Activated naive CD8-positive, alpha-beta T cell treated with anti-CD3 and anti-CD28 coated beads, Interleukin-2, amount 10 ng/mL, durations not matched to agents 7 days and 5 days (primary cell): ENCODE measurements at regions of chr12 and their contacts with region 1.

Region 1: GRCh38 chr12:50111693-50112455 is at the start of gene COX14:
- DNase-seq: peak; percentile 99
- ATAC-seq: peak; percentile 89
- H3K4me3 Mint-ChIP-seq: peak within 1 kb of the TSS; percentile 100
- H3K27ac Mint-ChIP-seq: peak within 1 kb of the TSS; percentile 100
- H3K4me1 Mint-ChIP-seq: peaks cover 24% of the 10 kb centered on the region
- H3K27me3 Mint-ChIP-seq: no peaks in the 10 kb centered on the region
- total RNA-seq, gene COX14: 47.5 to 54.2 TPM

Region 2: GRCh38 chr12:50057000-50057841 is 54.7 kb before region 1 on chr12 and contains the start of gene ASIC1:
- POLR2A ChIA-PET with region 1: interaction called, 11 read pairs
- DNase-seq: peak; percentile 78
- ATAC-seq: peak; percentile 38
- H3K4me3 Mint-ChIP-seq: peak within 1 kb of the TSS; percentile 88
- H3K27ac Mint-ChIP-seq: peak within 1 kb of the TSS; percentile 91
- H3K4me1 Mint-ChIP-seq: peaks cover 53% of the 10 kb centered on the region
- H3K27me3 Mint-ChIP-seq: peaks cover 14% of the 10 kb centered on the region
- total RNA-seq, gene ASIC1: 31.3 to 33.3 TPM

Region 3: GRCh38 chr12:50084775-50085614 is 26.9 kb before region 1 on chr12 and contains the start of gene SMARCD1:
- POLR2A ChIA-PET with region 1: interaction called, 27 read pairs
- DNase-seq: peak; percentile 82
- ATAC-seq: peak; percentile 89
- H3K4me3 Mint-ChIP-seq: peak within 1 kb of the TSS; percentile 95
- H3K27ac Mint-ChIP-seq: peak within 1 kb of the TSS; percentile 96
- H3K4me1 Mint-ChIP-seq: peaks cover 23% of the 10 kb centered on the region
- H3K27me3 Mint-ChIP-seq: no peaks in the 10 kb centered on the region
- total RNA-seq, gene SMARCD1: 57.2 to 68.1 TPM

Region 4: DNA sequence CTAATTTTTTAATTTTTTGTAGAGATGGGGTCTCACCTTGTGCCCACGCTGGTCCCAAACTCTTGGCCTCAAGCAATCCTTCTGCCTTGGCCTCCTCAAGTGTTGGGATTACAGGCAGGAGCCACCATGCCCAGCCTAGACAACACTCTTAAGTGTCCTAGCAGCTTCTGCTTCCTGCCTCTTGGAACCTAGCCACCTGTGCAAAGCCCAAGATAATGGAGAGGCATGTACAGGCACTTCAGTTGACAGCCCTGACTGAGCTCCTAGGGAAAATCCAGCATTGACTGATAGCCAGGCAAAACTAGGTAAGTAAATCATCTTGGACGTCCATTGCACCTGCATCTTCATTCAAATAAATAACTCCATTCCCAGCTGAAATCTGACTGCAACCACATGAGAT is 15.7 kb after region 1 on chr12:
- POLR2A ChIA-PET with region 1: interaction called, 18 read pairs
- DNase-seq: no peak
- ATAC-seq: no peak
- H3K4me3 Mint-ChIP-seq: no peak overlapping the region
- H3K27ac Mint-ChIP-seq: no peak overlapping the region
- H3K4me1 Mint-ChIP-seq: peaks cover 14% of the 10 kb centered on the region
- H3K27me3 Mint-ChIP-seq: no peaks in the 10 kb centered on the region

Region 5: DNA sequence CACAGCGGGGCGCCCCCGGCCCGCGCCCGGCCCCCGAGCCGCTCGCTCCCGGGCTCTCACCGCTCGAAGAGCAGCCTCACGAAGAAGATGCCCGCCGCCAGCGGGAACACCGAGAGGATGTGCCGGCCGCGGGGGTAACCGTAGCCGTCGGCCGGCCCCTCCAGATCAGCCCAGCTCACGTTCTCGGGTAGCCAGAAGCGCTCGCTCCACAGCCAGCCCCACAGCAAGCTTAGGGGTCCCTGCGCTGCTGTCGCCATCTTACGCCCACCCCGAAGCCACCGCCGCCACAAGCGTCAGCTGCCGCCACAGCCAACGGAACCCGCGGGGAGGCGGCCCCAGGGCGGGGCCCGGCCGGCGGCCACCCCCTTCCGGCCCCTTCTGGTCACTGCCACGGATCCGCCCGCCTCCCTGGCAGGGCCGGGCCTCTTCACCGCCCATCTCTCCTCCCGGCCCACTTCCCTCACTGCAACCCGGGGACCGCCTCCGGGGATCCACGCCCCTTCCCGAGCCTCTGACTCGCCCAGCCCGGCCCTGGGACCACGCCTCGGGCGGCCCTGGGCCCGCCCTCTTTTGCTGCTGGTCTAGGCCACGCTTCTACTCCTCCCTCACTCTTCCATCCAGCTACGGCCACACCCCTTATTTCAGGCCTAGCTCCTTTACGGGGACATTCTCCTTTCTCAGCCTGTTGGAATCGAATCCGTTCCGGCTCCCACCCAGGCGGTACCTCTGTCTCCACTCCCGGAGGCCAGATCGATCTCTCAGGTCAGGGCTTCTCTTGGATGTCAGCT is 55.4 kb after region 1 on chr12 and contains the start of gene CERS5:
- POLR2A ChIA-PET with region 1: interaction called, 42 read pairs
- DNase-seq: peak; percentile 97
- ATAC-seq: peak; percentile 98
- H3K4me3 Mint-ChIP-seq: peak within 1 kb of the TSS; percentile 97
- H3K27ac Mint-ChIP-seq: peak within 1 kb of the TSS; percentile 95
- H3K4me1 Mint-ChIP-seq: peaks cover 11% of the 10 kb centered on the region
- H3K27me3 Mint-ChIP-seq: no peaks in the 10 kb centered on the region
- total RNA-seq, gene CERS5: 47.1 to 53.0 TPM

Region 6: DNA sequence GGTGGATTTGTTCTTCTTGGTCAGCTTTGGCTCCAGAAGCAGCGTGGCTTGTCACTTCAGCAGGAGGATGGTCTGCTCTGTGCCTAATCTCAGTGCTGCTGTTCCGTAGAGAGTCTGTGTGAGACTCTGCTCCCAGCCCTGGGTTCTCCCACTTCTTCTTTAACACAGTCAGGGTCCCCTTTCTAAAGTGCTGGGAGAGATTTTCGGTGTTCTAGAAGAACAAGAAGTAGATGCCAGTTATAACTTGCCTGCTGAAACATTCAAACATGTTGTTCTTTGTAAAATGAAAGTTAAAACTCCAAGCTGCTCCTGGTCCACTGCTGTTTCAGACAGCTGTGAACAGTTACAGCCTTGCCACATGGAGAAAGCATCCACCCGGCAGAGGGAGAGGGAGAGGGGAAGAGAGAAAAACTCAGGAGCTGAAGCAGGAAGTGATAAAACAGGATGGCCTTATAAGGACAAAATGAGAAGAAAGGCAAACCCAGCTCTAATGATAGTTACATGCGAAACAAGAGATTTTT is 110.5 kb after region 1 on chr12:
- POLR2A ChIA-PET with region 1: interaction called, 15 read pairs
- DNase-seq: no peak
- ATAC-seq: peak; percentile 40
- H3K4me3 Mint-ChIP-seq: no peak overlapping the region
- H3K27ac Mint-ChIP-seq: no peak overlapping the region
- H3K4me1 Mint-ChIP-seq: peaks cover 20% of the 10 kb centered on the region
- H3K27me3 Mint-ChIP-seq: no peaks in the 10 kb centered on the region

Region 7: DNA sequence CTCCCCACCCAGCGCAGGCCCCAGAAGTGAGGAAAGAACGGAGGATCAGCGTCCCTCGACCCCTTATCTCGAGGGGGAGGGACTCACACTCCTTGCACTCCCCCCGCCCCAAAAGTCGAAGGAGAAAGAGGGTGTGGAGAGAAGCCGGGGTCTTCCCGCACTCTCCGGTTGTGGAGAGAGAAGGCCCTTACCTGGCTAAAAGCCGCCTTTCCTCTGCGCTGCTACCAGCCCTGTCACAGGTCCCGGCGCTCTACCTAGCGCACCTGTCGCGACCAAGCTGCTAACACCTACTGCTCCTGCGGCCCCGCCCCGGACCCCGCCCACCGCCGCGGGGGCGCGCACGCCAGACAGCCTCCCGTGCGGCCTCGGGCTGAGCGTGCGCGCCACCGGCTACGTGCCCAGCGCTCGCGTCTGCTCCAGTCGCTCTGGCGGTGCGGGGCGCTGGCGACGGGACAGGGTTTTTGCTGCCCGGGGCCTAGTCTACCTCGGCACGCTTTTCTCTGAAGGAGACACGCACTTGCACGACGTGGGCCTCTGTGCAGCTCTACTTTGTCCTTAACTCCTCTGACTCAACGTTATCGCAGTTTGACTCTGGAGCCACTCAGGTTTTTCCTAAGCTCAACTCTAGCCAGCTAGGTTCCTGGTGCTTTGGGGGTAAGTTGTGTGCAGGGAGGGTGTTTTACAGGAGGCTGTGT is 171.5 kb after region 1 on chr12 and contains the start of gene LIMA1:
- POLR2A ChIA-PET with region 1: interaction called, 12 read pairs
- DNase-seq: peak; percentile 98
- ATAC-seq: peak; percentile 98
- H3K4me3 Mint-ChIP-seq: peak within 1 kb of the TSS; percentile 90
- H3K27ac Mint-ChIP-seq: peak within 1 kb of the TSS; percentile 89
- H3K4me1 Mint-ChIP-seq: peaks cover 17% of the 10 kb centered on the region
- H3K27me3 Mint-ChIP-seq: peaks cover 14% of the 10 kb centered on the region
- total RNA-seq, gene LIMA1: 11.3 to 13.6 TPM